HCT116 (cell line): ENCODE measurements at regions of chr2 and their contacts with region 1.

Region 1: DNA sequence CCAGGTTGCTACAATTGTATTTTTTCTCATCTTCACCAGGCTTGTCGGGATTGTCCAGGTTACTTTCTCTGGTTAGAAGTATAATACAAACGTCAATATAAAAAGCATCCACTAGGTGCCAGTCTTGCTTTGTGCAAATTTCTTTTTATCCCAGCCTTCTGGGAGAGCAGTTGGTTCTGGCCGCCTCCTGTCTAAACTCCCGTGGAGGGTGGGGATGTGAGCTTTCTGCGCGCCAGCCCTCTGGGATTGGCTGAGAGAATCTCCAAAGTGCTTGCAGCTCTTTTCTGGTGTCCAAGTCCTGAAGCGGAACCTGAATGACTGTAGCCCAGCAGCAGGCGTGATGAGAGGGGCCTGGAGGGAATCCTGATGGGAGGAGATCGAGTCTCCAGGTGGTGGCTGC is 22.4 kb upstream of the TOGARAM2 start:
- DNase-seq: peak; percentile 37
- ATAC-seq: peak; percentile 78
- H3K4me3 ChIP-seq: no peak overlapping the region
- H3K27ac ChIP-seq: no peak overlapping the region
- H3K4me1 ChIP-seq: peaks cover 3 to 10% of the 10 kb centered on the region in 2 experiments; a peak in 2 of 4 replicates
- H3K27me3 ChIP-seq: no peaks in the 10 kb centered on the region
- CTCF ChIP-seq: peak; percentile 45 to 87 (median 69)
- POLR2A ChIP-seq: no peak
- RAD21 ChIP-seq: peak; percentile 97

Region 2: DNA sequence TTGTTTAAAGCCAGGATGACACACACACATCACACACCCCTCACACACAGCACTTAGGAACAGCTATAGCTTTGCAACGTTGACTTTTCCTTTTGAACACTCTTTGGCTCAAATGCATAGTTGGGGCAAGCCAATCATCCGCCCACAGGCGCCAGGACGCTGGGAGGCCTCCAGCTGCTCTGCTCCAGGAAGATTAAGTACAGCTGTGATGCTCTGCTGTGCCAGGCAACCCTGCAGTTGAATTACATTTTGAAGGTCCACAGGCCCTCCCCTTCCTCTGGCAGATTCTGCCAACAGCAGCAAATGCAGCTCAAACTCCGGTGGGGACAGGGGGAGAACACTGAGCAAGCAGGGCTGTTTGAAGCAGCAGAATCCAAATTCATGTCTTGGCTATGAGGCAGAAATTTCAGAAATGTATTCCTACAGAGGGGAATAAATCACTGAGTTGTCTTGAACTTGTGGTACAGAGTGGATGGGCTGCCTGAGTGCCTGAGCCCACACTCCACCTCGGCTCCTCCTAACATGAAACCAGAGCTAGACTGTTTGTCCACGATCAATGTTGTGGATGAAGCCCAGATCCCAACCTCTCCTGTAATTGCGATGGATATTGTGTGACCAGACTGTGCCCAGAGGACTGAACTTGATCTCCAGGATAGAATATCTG is 293.5 kb before region 1 on chr2:
- CTCF ChIA-PET with region 1: no interaction called
- POLR2A ChIA-PET with region 1: no interaction called
- RAD21 ChIA-PET with region 1: no interaction called
- intact Hi-C with region 1: no loop called
- DNase-seq: no peak
- ATAC-seq: no peak
- H3K4me3 ChIP-seq: no peak overlapping the region
- H3K27ac ChIP-seq: no peak overlapping the region
- H3K4me1 ChIP-seq: peaks cover 14 to 18% of the 10 kb centered on the region in 2 experiments; a peak in 3 of 4 replicates
- H3K27me3 ChIP-seq: no peaks in the 10 kb centered on the region
- CTCF ChIP-seq: no peak
- POLR2A ChIP-seq: no peak
- RAD21 ChIP-seq: no peak

Region 3: GRCh38 chr2:29014811-29015421 is 56.2 kb after region 1 on chr2:
- CTCF ChIA-PET with region 1: no interaction called
- POLR2A ChIA-PET with region 1: no interaction called
- RAD21 ChIA-PET with region 1: no interaction called
- intact Hi-C with region 1: no loop called
- DNase-seq: no peak
- ATAC-seq: no peak
- H3K4me3 ChIP-seq: no peak overlapping the region
- H3K27ac ChIP-seq: no peak overlapping the region
- H3K4me1 ChIP-seq: no peaks in the 10 kb centered on the region
- H3K27me3 ChIP-seq: no peaks in the 10 kb centered on the region
- CTCF ChIP-seq: no peak
- POLR2A ChIP-seq: no peak
- RAD21 ChIP-seq: no peak

Region 4: DNA sequence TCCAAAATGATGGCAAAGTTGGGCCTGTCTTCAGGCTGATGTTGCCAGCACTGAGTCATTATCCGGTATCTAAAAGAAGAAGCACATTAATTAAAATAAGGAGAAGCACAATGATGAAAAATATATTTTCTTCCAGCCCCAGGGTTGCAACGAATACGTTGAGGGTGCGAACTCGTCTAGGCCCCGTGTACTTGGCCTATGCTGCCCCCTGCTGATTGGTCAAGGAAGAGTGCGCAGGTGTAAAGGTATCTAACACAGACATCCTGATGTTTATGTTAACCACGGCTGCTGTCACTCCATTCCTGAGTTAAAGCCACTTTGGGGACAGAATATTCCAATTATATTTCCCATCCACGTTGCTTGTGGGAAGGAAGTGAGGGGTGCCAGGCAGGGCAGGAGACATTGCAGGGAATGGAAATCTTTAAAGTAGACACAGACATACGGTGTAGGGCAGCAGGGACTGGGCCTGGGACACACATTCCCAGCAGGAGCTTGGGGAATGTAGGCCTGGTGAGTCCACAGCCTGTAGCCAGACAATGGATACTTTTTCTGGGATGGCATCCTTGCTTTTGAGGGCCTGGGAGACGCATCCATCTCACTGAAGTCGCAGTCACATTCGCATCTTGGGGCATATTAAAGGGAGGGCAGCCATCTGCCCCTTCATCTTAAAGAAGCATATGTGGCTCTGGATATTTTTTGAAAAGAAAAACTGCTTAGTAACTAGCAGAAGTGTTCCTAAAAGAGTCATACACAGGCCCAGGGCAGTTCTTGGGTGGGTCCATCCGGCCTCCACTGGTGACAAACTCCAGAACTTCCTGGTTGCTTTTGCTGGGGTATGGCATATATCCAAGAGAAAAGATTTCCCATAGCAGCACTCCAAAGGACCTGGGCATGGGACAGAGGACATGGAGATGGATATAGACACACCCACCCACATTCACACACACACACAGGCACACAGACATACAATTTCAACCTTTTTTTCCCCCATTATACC is 238.4 kb after region 1 on chr2:
- CTCF ChIA-PET with region 1: interaction called, 4 read pairs
- POLR2A ChIA-PET with region 1: no interaction called
- RAD21 ChIA-PET with region 1: no interaction called
- intact Hi-C with region 1: loop called (anchors 1 kb)
- DNase-seq: peak; percentile 57
- ATAC-seq: peak; percentile 97
- H3K4me3 ChIP-seq: no peak overlapping the region
- H3K27ac ChIP-seq: no peak overlapping the region
- H3K4me1 ChIP-seq: no peaks in the 10 kb centered on the region
- H3K27me3 ChIP-seq: no peaks in the 10 kb centered on the region
- CTCF ChIP-seq: peak; percentile 81 to 95 (median 89)
- POLR2A ChIP-seq: no peak
- RAD21 ChIP-seq: peak; percentile 98

Region 5: GRCh38 chr2:29343830-29344229 is 385.1 kb after region 1 on chr2:
- CTCF ChIA-PET with region 1: interaction called, 5 read pairs
- POLR2A ChIA-PET with region 1: no interaction called
- RAD21 ChIA-PET with region 1: no interaction called
- intact Hi-C with region 1: loop called (anchors 5 kb)
- DNase-seq: no peak
- ATAC-seq: peak; percentile 64; the same call in 1 of the 2 replicates
- H3K4me3 ChIP-seq: no peak overlapping the region
- H3K27ac ChIP-seq: no peak overlapping the region
- H3K4me1 ChIP-seq: no peaks in the 10 kb centered on the region
- H3K27me3 ChIP-seq: peaks cover 78% of the 10 kb centered on the region
- CTCF ChIP-seq: peak in 2 of 3 experiments; percentile 10 to 48; a peak in 2 of 6 replicates
- POLR2A ChIP-seq: no peak
- RAD21 ChIP-seq: peak; percentile 40

Region 6: DNA sequence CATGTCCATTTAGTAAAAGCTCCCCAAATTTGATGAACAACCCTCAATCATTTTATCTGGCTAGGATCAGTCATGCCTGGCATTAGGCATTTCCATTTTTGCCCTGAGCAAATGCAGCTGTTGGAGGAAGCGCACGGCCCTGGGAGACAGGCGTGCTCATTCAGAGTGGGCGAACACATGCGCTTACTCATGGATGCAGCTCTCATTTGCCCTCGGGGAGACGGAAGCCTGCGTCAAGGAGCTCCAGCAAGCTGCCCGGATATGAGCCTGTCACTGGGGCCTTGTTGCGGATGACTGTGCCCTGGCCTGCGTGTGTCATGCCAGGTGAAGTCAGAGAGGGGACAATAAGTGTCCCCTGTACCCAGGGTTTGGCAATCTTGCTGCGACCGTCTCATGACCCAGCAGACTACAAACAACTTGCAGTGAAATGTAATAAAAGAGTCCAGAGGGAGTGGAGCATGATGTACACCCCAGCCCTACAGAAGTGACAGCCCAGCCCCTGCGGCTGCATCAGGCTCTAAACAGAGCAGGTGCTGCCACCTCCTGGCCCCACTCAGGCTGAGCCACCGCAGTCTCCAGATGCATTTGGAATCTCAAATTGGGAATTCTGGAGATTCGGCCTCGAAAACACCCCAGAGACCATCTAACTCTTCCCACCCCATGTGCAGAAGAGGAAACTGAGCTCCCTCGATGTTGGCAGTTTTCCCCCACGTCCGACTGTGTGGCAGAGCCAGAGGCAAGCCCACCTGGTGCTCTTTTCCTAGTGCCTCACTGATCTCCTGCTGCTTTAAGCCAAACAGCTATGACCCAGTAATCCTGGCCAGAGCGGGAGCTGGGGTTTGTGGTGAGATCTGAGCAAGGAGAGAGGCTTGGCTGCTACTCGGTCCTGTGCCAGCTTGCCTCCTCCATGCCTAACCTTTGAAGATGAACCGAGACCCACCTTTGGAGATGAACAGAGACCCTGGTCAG is 1067.7 kb after region 1 on chr2:
- CTCF ChIA-PET with region 1: interaction called, 3 read pairs
- POLR2A ChIA-PET with region 1: no interaction called
- RAD21 ChIA-PET with region 1: no interaction called
- intact Hi-C with region 1: loop called (anchors 1 kb)
- DNase-seq: peak; percentile 4
- ATAC-seq: peak; percentile 92
- H3K4me3 ChIP-seq: no peak overlapping the region
- H3K27ac ChIP-seq: no peak overlapping the region
- H3K4me1 ChIP-seq: no peaks in the 10 kb centered on the region
- H3K27me3 ChIP-seq: peaks cover 67% of the 10 kb centered on the region
- CTCF ChIP-seq: peak; percentile 44 to 84 (median 82); a peak in 5 of 6 replicates
- POLR2A ChIP-seq: no peak
- RAD21 ChIP-seq: peak; percentile 75

Region 7: DNA sequence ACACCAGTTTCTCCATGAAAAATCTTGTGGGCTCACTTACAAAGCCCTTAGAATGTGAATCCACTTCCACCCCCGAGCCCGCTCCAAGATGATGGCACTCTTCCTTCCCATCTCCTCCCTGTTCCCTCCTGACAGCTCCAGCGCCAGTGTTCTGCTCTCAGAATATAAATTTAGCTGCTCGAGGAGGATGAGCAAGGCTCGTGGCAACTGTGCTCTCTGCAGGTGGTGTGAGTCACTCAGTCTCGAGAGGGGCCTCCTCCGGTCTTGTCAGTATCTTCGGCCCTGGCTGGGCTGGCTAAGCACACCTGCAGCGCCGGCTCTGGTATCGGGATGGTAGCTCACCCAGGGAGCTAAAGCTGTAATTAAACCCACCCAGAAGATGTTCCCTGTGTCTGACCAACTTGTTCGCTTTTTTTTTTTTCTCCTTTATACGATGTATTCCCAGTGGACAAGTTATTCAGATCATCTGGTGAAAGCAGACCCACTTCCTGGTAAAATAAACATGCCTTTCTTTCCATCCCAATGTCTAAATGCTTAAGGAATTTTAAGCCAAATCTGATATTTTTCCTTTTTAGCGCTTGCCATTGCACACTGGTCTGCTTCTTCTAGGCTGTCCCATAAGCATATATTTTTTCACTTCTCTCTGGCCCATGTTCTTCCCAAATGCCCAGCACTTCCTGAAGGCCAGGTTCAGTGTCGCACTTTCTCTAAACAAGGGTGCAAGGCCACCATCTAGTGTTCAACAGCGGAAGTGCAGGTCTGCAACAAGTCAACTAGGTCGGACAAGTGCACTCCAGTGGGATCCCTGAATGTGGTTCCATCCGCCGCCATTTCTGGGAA is 1156.7 kb after region 1 on chr2:
- CTCF ChIA-PET with region 1: interaction called, 3 read pairs
- POLR2A ChIA-PET with region 1: no interaction called
- RAD21 ChIA-PET with region 1: no interaction called
- intact Hi-C with region 1: loop called (anchors 2 kb)
- DNase-seq: peak; percentile 76
- ATAC-seq: peak; percentile 97
- H3K4me3 ChIP-seq: no peak overlapping the region
- H3K27ac ChIP-seq: no peak overlapping the region
- H3K4me1 ChIP-seq: peaks cover 0 to 10% of the 10 kb centered on the region in 2 experiments; a peak in 3 of 4 replicates
- H3K27me3 ChIP-seq: no peaks in the 10 kb centered on the region
- CTCF ChIP-seq: peak; percentile 90 to 98 (median 97); a peak in 5 of 6 replicates
- POLR2A ChIP-seq: no peak
- RAD21 ChIP-seq: peak; percentile 92